Right ventricle myocardium superior (tissue), 1 donor: ENCODE measurements at regions of chr17 and their contacts with region 1.

Region 1: DNA sequence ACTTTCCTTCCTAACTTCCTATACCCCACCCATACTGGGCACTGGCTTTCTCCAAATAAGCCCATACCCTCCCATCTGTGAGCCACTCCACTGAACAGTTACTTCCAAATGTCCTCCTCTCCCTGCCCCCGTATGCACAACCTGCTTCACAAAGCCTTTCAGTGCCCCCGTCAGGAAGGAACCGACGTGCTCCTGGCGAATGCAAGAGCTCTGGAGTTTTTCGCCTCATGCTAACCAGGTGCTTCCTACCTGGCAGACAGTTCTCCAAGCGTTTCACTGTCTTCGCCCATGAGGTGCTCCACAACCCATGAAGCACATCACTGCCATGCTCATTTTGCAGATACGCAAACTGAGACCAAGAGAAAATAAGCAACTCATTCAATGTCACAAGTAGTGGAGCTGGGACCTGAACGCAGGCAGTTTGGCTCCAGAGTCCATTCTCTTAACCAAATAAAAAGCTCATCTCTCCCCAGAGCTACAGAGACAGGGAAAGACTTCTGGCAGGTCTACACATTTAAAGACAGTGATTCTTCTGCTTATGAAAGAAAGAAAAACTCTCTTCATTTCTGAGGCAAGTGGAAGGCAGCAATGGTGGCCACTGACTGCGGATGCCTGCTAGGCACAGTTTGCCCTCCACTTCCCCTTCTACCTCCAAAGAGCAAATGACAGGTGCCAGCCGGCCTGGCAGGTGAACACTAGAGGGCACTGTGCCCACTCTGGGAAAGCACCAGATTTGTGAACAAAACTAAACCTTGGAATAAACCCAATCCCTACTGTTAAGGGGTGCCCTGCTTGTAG is 23.8 kb downstream of the SPHK1 start:
- DNase-seq: peak; percentile 71
- ATAC-seq: peak; percentile 8

Region 2: DNA sequence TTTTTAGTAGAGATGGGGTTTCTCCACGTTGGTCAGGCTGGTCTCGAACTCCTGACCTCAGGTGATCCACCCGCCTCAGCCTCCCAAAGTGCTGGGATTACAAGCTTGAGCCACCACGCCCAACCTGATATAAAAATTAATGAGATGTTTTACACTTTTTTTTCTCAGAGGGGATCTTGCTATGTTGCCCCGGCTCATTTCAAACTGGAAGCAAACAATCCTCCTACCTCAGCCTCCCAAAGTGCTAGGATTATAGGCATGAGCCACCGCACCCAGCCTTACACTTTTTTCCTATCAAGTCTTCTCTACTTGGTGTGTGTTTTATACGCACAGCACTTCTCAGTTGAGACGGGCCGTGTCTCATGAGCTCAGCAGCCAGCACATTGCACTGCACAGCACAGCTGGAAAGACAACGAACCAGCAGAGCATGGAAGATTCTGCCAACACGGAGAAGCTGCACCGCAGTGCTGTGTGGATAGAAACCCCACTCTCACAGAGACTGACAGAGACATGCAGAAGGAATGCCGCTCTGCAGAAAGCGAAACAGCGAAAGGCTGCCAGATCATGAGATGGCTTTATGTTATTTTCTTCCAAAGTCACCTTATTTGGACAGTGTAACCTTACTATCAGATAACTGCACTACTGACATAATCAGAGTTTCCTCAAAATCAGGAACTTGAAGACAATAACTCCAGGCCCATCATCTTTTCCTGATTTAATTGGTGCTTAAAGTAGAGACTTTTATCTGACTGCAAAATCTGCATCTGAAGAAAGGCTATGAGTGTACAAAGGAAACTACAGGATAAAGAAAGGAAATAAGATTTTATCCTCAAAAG is 93.6 kb before region 1 on chr17:
- intact Hi-C with region 1: no loop called
- DNase-seq: no peak
- ATAC-seq: no peak

Region 3: DNA sequence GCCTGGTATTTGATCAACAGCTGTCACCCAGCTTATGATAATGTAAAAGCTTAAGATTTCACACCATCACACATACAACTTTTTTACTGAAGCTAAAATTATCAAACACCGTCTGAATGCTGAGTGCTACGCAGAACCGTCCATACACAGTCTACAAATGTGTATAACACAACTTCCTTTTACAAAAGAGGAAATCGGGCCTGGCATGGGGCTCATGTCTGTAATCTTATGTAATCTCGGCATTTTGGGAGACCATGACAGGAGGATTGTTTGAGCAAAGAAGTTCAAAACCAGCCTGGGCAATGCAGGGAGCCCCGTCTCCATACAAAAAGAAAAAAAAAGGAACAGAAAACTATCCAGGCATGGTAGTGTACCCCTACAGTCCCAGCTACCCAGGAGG is 80.6 kb before region 1 on chr17:
- intact Hi-C with region 1: no loop called
- DNase-seq: no peak
- ATAC-seq: no peak

Region 4: GRCh38 chr17:76458580-76459490 is 50.6 kb after region 1 on chr17:
- intact Hi-C with region 1: loop called (anchors 5 kb)
- DNase-seq: peak; percentile 71
- ATAC-seq: peak; percentile 88

Region 5: GRCh38 chr17:76631829-76632565 is 223.7 kb after region 1 on chr17:
- intact Hi-C with region 1: no loop called
- DNase-seq: no peak
- ATAC-seq: no peak